ENCODE measurements at regions of chr18 and their contacts with region 1.

Region 1: DNA sequence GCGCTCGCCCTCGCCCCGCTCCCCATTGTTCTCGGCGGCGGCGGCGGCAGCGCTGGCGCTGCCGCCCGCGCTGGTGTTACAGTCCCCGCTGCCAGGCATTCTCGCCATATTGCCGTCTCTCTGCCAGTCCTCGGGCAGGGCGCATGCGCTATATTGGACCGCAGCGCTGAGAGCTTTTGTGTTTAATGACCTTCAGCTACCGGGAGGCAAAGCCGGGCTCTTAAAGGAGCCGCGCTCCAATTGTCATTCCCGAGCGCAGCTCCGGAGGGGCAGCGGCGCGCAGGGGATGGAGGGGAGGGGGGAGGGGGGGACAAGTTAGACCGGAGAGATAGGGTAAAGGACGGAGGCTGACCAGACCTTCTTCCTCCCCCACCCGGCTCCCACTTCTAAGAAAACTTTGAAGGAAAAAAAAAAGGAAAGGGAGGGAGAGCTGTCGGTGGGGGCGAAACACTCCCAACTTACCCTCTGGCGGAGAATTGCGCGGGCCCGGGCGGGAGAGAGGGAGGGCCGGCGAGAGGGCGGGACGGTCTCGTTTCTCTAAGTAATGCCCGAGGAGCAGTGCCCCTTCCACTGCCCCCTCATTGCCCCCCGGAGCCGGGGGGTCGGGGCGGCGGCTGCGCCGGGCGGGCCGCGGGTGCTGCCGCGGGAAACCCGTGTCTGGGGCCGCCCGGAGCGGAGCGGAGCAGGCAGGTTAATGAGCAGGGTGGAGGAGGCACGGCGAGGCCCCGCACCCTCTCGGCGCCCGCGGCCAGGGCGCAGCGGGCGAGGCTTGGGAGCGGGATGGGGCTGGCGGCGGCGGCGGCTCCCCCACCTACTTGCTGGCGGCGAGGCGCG is at the start of gene KCTD1:
- DNase-seq: peak; percentile 81
- H3K4me3 ChIP-seq: peak within 1 kb of the TSS; percentile 74 to 95 (median 89)
- H3K27ac ChIP-seq: peak within 1 kb of the TSS; percentile 80
- H3K4me1 ChIP-seq: peaks cover 25% of the 10 kb centered on the region
- H3K27me3 ChIP-seq: no peaks in the 10 kb centered on the region
- CTCF ChIP-seq: no peak
- total RNA-seq, gene KCTD1: 35.3 to 64.6 TPM

Region 2: GRCh38 chr18:26405190-26405801 is 143.3 kb before region 1 on chr18:
- CTCF ChIA-PET with region 1: no interaction called
- dilution Hi-C with region 1: no loop called
- in situ Hi-C with region 1: no loop called
- intact Hi-C with region 1: loop called (anchors 1 kb)
- DNase-seq: peak; percentile 51
- H3K4me3 ChIP-seq: no peak overlapping the region
- H3K27ac ChIP-seq: no peak overlapping the region
- H3K4me1 ChIP-seq: peaks cover 17% of the 10 kb centered on the region
- H3K27me3 ChIP-seq: no peaks in the 10 kb centered on the region
- CTCF ChIP-seq: peak; percentile 34 to 67

Region 3: DNA sequence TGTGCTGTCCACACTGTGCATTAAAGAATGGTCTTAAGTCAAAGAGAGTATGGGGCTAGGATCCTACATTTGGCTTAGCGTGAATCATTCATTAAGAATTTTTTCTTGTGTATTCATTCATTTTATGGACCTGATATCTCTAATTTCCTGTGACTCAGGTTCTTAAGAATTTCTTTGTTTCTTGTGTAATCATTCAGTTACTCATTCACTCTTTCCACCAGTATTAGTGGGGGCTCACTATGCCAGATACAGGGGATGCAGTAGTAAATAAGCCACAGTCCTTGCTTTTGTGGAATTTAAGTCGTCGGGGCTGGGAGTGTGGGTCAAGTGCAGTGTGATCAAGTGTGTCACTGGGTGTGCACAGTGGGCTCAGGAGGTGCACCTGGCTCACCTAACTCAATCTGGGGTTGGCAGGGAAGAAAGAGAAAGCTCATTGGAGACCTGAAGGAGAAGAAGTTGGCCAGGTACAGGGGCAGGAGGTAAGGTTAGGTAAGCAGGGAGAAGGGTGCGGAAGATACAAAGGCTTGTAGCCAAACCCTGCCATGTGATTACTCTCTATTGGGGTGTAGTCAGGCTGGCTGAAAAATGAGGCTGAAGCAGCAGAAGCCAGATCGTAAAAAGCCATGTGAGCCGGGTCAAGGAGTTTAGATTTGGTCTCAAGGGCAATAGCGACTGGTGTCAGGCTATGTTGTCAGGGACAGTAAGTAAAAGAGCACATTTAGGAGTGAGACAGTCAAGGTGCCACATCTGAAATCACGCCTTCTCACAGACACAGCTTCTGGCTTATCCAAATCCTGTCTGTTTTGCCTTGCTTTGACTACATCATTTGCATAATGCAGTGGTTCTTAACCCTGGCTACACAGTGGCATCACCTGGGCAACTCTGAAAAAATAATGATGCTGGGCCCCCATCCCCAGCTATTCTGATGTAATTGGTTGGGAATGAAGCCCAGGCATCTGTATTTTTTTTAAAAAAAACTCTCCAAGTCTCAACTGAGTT is 67.5 kb before region 1 on chr18:
- CTCF ChIA-PET with region 1: interaction called, 12 read pairs
- dilution Hi-C with region 1: loop called (anchors 5 kb)
- in situ Hi-C with region 1: loop called in 1 of 2 experiments (anchors 10 kb)
- intact Hi-C with region 1: loop called (anchors 2 kb)
- DNase-seq: peak; percentile 87
- H3K4me3 ChIP-seq: peak overlapping the region in 2 of 3 experiments; percentile 4 to 25
- H3K27ac ChIP-seq: peak overlapping the region; percentile 97
- H3K4me1 ChIP-seq: peaks cover 83% of the 10 kb centered on the region
- H3K27me3 ChIP-seq: no peaks in the 10 kb centered on the region
- CTCF ChIP-seq: no peak

Region 4: DNA sequence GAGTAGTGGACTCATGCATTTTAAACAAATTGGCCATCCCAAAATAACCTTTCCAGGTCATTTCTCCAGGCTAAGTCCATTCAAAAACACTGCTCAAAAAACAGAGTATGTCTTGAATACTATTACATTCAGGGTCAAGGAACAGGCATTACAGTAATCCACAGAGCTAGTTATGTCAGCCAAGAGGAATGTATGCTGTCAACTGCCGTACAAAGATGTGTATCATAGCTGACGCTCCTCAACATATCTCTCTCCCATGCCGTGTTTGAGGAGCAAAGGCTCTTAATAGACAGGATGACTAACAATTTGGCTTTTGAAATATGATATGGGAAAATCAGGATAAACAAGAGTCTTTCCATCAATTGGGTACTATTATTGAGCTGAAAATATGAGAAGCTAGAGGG is 68.5 kb after region 1 on chr18:
- CTCF ChIA-PET with region 1: interaction called, 5 read pairs
- dilution Hi-C with region 1: no loop called
- in situ Hi-C with region 1: no loop called
- intact Hi-C with region 1: loop called (anchors 1 kb)
- DNase-seq: peak; percentile 93
- H3K4me3 ChIP-seq: no peak overlapping the region
- H3K27ac ChIP-seq: no peak overlapping the region
- H3K4me1 ChIP-seq: peaks cover 14% of the 10 kb centered on the region
- H3K27me3 ChIP-seq: no peaks in the 10 kb centered on the region
- CTCF ChIP-seq: no peak

Region 5: DNA sequence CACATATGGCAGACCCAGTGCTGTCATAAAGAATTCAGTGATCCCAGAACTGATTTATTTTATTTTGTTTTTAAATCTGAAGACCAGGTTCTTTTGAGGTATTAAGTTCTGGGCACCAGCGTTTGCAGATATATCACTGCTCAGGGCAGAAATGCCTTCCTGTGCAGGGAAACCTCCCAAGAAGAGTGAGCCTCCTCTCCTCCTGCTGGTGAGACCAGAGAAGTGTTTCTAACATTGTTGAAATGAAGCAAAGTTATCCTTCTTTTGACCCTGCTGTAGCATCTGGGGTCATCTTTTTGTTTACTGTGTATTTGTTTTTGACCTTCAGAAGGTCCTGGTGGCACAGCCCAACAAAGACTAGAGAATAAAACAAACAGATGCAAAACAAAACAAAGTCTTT is 222.9 kb after region 1 on chr18:
- CTCF ChIA-PET with region 1: no interaction called
- dilution Hi-C with region 1: no loop called
- in situ Hi-C with region 1: no loop called
- intact Hi-C with region 1: loop called (anchors 5 kb)
- DNase-seq: no peak
- H3K4me3 ChIP-seq: no peak overlapping the region
- H3K27ac ChIP-seq: no peak overlapping the region
- H3K4me1 ChIP-seq: no peaks in the 10 kb centered on the region
- H3K27me3 ChIP-seq: peaks cover 5% of the 10 kb centered on the region
- CTCF ChIP-seq: peak; percentile 43 to 72

Measured in mammary epithelial cell (primary cell).